ENCODE measurements at regions of chr3 and their contacts with region 1.

Region 1: DNA sequence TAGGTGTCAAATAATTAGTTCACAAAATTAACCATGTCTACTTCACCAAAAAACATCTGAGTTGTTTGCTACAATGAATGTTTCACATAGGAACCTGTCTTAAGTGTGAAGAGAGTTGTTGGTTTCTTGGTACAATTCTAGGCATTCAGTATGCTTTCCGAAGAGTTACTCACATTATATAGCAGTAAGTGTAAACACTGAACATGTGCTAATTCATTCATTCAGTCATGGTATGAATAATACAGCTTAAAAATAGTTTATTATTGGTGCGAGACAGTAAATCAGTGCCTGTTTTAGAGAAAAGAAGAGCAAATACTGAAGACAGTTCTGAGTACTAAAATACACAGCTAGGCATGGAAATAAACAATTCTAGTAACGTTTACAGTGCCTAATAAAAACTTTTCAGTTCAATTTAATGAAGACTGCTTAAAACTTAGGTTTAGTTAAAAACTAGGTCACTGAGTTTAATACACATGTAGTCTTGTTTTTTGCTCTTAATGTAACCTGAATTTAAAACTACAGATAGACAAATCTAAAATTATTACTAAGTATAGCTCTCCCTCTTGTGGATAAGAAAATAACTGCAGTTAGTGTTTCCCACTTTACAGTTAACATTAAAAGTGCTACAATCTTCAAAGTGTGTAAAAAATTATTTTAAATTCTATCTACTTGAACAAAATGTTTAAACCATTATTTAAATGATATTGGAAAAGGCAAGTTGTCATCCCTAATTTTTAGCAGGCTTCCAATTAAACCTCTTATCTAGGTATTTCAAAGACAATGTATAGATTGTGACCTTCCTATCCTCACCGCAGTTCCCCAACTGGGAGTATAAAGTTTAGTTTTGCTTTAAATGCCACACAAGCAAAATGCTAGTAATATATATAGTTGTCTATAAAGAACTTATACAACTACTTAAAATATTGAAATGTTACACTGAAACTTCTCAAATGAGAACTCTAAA is 20.1 kb upstream of the ZCWPW2 start:
- DNase-seq: no peak
- H3K4me3 ChIP-seq: no peak overlapping the region
- H3K27ac ChIP-seq: no peak overlapping the region
- H3K4me1 ChIP-seq: no peaks in the 10 kb centered on the region
- H3K27me3 ChIP-seq: no peaks in the 10 kb centered on the region
- CTCF ChIP-seq: peak; percentile 48 to 67 (median 60)
- POLR2A ChIP-seq: no peak

Region 2: DNA sequence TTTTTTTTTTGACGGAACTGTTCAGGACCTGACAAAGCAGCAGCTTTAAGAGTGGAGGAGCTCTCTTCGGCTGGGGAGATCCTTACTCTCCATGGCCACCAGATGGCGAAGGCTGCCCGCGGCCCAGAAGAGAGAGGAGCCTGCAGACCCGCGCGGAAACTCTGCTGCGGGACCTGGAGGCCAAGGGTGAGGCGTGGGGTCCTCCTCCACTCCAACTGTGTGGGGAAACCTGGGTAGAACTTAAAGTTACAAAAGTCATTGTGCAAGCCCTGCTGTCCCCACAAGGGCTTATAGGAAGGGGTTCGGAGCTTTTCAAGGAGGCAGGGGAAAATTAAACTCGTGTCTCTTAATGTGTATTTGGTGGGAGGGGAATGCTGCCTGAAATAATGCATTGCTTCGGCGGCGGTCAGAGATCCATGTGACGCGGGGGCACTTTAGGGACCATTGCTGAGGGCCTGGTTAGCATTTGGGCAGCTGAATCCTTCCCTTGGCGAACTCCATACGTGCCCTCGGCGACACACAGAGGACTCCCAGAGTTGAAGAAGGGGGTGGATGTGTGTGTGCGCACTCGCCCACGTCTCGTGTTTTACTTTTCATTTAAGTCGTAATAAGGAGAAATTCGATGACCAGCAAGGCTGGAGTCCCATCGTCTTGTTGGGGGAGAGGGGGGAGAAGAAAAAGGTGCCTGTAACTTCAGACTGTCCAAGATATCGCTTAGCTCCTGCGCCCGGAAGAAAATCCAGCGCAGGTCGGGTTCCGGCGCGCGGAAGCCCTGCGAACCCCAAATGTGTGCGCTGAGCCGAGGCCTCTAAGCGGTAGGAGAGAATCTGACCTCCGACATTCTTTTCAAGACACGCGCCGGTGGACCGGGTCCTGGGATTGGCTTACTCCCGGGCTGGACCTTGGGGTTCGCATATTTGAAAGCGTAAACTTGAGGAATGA is 616.1 kb before region 1 on chr3:
- intact Hi-C with region 1: loop called (anchors 5 kb)
- DNase-seq: peak; percentile 66
- H3K4me3 ChIP-seq: peak overlapping the region; percentile 32 to 37
- H3K27ac ChIP-seq: no peak overlapping the region
- H3K4me1 ChIP-seq: no peaks in the 10 kb centered on the region
- H3K27me3 ChIP-seq: no peaks in the 10 kb centered on the region
- CTCF ChIP-seq: peak; percentile 29 to 69 (median 64)
- POLR2A ChIP-seq: no peak

Measured in prostate gland (tissue), 2 donors.